Cardiac septum (tissue), 1 donor: ENCODE measurements at regions of chr15 and their contacts with region 1.

Region 1: GRCh38 chr15:71109130-71109529 is 6.1 kb upstream of the THSD4 start:
- DNase-seq: no peak

Region 2: DNA sequence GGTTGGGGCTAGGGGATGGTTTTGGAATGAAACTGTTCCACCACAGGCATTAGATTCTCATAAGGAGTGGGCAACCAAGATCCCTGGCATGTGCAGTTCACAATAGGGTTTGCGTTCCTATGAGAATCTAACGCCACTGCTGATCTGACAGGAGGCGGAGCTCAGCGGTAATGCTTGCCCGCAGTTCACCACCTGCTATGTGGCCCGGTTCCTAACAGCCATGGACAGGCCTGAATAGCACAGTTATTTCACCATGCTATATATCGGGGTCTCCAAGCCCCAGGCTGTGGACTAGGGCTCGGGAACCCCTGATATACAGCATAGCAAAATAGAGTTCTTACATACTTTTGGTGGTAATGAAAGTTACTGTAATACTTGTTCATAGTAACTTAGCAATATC is 93.8 kb before region 1 on chr15:
- intact Hi-C with region 1: loop called (anchors 5 kb)
- DNase-seq: no peak